ENCODE measurements at regions of chr3 and their contacts with region 1.

Region 1: DNA sequence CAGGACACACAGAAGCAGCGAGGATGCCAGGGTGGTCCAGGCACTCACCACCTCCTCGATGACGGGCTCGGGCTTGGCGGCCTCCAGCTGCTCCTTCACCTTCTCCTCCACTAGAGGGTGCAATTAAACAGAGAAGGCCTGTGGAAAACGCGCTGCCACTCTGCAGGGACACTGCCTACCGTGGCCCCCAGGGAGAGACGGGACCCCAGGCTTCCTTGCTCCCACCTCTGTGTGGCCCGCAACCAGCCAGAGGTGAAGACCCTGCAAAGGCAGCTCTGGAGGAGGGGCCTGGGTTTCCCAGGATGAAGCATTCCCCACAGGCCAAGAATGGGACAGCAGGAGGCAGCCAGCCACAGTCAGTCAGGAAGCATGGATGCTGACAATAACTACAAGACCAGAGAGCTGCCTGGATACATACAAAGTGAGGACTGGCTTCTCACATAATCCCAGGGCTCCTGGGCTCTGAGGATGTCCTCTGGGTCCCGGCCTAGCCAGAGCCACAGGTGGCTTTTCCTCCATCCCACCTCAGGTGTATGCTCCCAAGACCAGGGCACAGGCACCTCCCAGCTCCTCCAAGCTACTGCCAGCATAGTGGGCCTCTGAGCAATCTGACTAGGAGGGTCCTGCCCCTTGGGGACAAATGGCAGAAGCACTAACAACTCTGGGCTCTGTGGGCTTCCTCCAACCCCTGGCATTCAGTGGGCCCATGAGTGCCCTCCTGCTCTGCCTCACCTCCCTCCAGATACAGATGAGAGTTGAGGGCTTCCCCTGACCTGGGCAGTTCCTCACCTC is 46.2 kb downstream of the PTH1R start:
- DNase-seq: no peak
- ATAC-seq: peak; percentile 16 to 35

Region 2: GRCh38 chr3:46970391-46971091 is 46.8 kb after region 1 on chr3:
- intact Hi-C with region 1: loop called in 1 of 2 experiments (anchors 5 kb)
- DNase-seq: peak; percentile 52
- ATAC-seq: peak; percentile 82 to 91

Region 3: GRCh38 chr3:46998121-46998851 is 74.5 kb after region 1 on chr3:
- intact Hi-C with region 1: loop called (anchors 1 to 5 kb)
- DNase-seq: peak; percentile 79
- ATAC-seq: peak; percentile 69 to 81

Region 4: DNA sequence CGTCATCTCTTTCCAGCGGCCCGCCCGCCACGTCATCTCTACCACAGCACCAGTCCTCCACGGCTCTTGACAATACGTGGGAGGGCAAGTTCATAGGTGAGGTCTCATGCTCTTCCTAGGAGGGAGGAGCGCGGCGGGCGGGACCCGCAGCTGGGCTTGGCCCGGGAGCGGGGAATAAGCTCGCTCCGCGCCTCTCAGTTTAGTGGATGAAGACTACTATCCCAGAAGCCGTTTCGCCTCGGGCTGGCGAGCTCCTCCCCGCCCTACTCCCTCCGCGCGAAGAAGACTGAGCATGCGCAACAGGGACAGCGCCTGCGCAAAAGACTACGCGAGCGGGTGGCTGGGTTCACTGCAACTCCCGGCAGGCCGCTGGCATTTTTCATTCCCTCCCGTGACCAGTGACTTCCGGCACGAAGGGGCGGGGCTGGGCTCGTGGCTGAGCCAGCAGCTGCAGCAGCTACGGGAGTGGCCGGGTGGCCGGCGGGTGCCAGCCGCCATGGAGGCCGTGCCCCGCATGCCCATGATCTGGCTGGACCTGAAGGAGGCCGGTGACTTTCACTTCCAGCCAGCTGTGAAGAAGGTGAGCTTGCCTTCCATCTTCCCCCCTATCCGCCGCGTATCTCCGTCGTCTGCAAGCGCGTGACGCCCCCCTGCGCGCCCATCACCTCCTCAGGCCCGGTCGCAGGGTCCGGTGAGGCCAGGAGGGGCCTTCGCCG is 457.0 kb after region 1 on chr3 and contains the start of gene PTPN23:
- intact Hi-C with region 1: loop called in 1 of 2 experiments (anchors 10 kb)
- DNase-seq: peak; percentile 99
- ATAC-seq: peak; percentile 92 to 95
- total RNA-seq, gene PTPN23: 24.1 to 24.8 TPM